Activated CD8-positive, alpha-beta T cell treated with anti-CD3 and anti-CD28 coated beads, Interleukin-2, amount 10 ng/mL, durations not matched to agents 7 days and 5 days (primary cell): ENCODE measurements at regions of chr12 and their contacts with region 1.

Region 1: GRCh38 chr12:124940549-124941527 is 26.4 kb upstream of the UBC start:
- DNase-seq: peak; percentile 90
- ATAC-seq: peak; percentile 53
- H3K4me3 Mint-ChIP-seq: no peak overlapping the region
- H3K27ac Mint-ChIP-seq: no peak overlapping the region
- H3K4me1 Mint-ChIP-seq: peaks cover 24% of the 10 kb centered on the region
- H3K27me3 Mint-ChIP-seq: no peaks in the 10 kb centered on the region

Region 2: GRCh38 chr12:124713436-124714082 is 227.3 kb before region 1 on chr12:
- CTCF ChIA-PET with region 1: no interaction called
- POLR2A ChIA-PET with region 1: no interaction called
- DNase-seq: peak; percentile 80
- ATAC-seq: peak; percentile 91
- H3K4me3 Mint-ChIP-seq: peak overlapping the region; percentile 60
- H3K27ac Mint-ChIP-seq: peak overlapping the region; percentile 90
- H3K4me1 Mint-ChIP-seq: peaks cover 23% of the 10 kb centered on the region
- H3K27me3 Mint-ChIP-seq: peaks cover 5% of the 10 kb centered on the region

Region 3: GRCh38 chr12:124725099-124725498 is 215.7 kb before region 1 on chr12:
- CTCF ChIA-PET with region 1: no interaction called
- POLR2A ChIA-PET with region 1: no interaction called
- DNase-seq: no peak
- ATAC-seq: no peak
- H3K4me3 Mint-ChIP-seq: no peak overlapping the region
- H3K27ac Mint-ChIP-seq: no peak overlapping the region
- H3K4me1 Mint-ChIP-seq: no peaks in the 10 kb centered on the region
- H3K27me3 Mint-ChIP-seq: peaks cover 8% of the 10 kb centered on the region

Region 4: GRCh38 chr12:124917135-124917840 is 23.6 kb before region 1 on chr12:
- CTCF ChIA-PET with region 1: interaction called, 391 read pairs
- POLR2A ChIA-PET with region 1: interaction called, 134 read pairs
- DNase-seq: peak; percentile 97
- ATAC-seq: peak; percentile 74
- H3K4me3 Mint-ChIP-seq: peak overlapping the region; percentile 99
- H3K27ac Mint-ChIP-seq: peak overlapping the region; percentile 98
- H3K4me1 Mint-ChIP-seq: peaks cover 83% of the 10 kb centered on the region
- H3K27me3 Mint-ChIP-seq: no peaks in the 10 kb centered on the region

Region 5: DNA sequence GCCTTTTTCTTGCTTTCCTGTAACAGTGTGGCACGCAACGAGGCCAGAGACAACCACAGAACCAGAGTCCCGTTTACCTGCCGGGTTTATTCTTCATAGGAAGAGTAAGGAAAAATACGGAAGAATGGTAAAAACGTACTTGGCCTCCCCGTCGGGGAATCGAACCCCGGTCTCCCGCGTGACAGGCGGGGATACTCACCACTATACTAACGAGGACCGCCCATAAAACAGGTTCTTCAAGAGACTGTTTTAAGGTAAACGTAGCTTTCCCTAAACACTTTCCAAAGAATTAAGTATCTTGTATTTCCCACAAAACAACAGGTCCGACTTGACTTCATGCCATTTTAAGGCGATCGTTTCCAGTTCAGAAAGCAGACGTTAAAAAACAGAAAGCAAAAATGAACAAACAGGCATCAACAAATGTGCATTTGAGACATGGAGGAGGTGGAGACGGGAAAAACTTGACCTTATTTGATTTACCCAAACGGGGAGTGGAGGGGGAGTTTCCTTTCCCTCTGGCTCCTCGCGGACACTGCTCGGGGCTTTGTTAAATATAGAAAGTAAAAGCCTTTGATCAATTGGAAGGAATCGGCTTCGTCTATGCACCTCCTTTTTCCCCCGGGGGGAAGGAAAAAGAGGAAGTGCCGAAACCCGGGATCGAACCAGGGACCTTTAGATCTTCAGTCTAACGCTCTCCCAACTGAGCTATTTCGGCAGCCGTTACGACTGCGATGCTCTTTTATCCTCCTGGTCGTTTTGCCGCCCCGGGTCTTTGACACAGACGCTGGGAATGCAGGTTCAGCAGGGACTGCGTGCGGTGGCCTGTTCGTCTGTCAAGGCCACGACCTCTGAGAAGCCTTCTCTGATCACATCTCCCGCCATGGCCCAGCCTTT is 13.4 kb before region 1 on chr12:
- CTCF ChIA-PET with region 1: interaction called, 391 read pairs
- POLR2A ChIA-PET with region 1: interaction called, 13 read pairs
- DNase-seq: peak; percentile 95
- ATAC-seq: peak; percentile 88
- H3K4me3 Mint-ChIP-seq: peak overlapping the region; percentile 86
- H3K27ac Mint-ChIP-seq: peak overlapping the region; percentile 93
- H3K4me1 Mint-ChIP-seq: peaks cover 40% of the 10 kb centered on the region
- H3K27me3 Mint-ChIP-seq: peaks cover 4% of the 10 kb centered on the region

Region 6: DNA sequence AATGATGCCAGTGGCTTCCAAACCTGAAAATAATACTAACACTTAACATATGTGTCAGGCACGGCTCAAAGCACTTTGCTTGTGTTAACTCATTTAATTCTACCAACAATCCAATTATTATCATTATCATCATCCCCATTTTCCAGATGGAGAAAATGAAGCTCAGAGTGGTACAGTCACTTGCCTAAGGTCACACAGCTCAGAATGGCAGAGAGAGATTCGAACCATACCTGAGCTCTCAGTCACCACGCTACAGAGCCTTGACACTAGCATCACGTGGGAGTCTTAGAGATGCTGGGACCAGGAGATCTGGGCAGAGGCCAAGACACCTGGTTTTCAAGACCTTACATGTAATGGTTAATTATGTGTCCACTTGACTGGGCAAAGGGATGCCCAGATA is 13.9 kb after region 1 on chr12:
- CTCF ChIA-PET with region 1: interaction called, 11 read pairs
- POLR2A ChIA-PET with region 1: no interaction called
- DNase-seq: no peak
- ATAC-seq: no peak
- H3K4me3 Mint-ChIP-seq: no peak overlapping the region
- H3K27ac Mint-ChIP-seq: no peak overlapping the region
- H3K4me1 Mint-ChIP-seq: no peaks in the 10 kb centered on the region
- H3K27me3 Mint-ChIP-seq: no peaks in the 10 kb centered on the region

Region 7: GRCh38 chr12:124992874-124993625 is 52.2 kb after region 1 on chr12:
- CTCF ChIA-PET with region 1: interaction called, 21 read pairs
- POLR2A ChIA-PET with region 1: interaction called, 4 read pairs
- DNase-seq: peak; percentile 92
- ATAC-seq: peak; percentile 58
- H3K4me3 Mint-ChIP-seq: peak overlapping the region; percentile 78
- H3K27ac Mint-ChIP-seq: peak overlapping the region; percentile 84
- H3K4me1 Mint-ChIP-seq: peaks cover 35% of the 10 kb centered on the region
- H3K27me3 Mint-ChIP-seq: no peaks in the 10 kb centered on the region